ENCODE measurements at regions of chr5 and their contacts with region 1.

Region 1: GRCh38 chr5:79255786-79256557 is 20.0 kb downstream of the JMY start:
- DNase-seq: no peak
- ATAC-seq: no peak
- H3K4me3 ChIP-seq: no peak overlapping the region
- H3K4me3 Mint-ChIP-seq: peak overlapping the region in 1 of 3 donors; percentile 37
- H3K27ac ChIP-seq: no peak overlapping the region
- H3K27ac Mint-ChIP-seq: no peak overlapping the region
- H3K4me1 ChIP-seq: peaks cover 0 to 40% of the 10 kb centered on the region in 2 experiments
- H3K4me1 Mint-ChIP-seq: peaks cover 58 to 62% (median 61%) of the 10 kb centered on the region in 3 donors
- H3K27me3 ChIP-seq: no peaks in the 10 kb centered on the region
- H3K27me3 Mint-ChIP-seq: no peaks in the 10 kb centered on the region

Region 2: DNA sequence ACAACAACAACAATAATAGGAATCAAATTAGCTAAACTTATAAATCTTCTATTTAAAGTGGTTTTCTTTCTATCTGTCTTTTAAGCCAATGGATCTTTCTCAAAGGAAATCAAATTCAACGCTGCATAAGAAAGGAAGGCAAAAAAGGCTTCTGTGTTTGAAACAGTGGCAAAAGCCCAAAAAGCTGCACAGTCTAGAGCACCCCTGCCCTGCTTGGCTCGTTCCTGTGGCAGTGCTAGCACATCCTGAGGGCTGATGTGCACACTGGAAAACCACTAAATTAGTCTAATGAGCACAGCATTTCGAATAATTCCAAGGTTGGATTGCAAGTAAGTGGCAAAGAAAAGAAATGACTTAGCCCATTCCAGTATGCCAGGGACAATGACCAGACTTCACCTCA is 1042.2 kb before region 1 on chr5:
- CTCF ChIA-PET with region 1: no interaction called
- POLR2A ChIA-PET with region 1: no interaction called
- DNase-seq: no peak
- ATAC-seq: no peak
- H3K4me3 ChIP-seq: no peak overlapping the region
- H3K4me3 Mint-ChIP-seq: no peak overlapping the region
- H3K27ac ChIP-seq: no peak overlapping the region
- H3K27ac Mint-ChIP-seq: no peak overlapping the region
- H3K4me1 ChIP-seq: no peaks in the 10 kb centered on the region
- H3K4me1 Mint-ChIP-seq: no peaks in the 10 kb centered on the region
- H3K27me3 ChIP-seq: no peaks in the 10 kb centered on the region
- H3K27me3 Mint-ChIP-seq: no peaks in the 10 kb centered on the region

Region 3: GRCh38 chr5:78908173-78909061 is 347.6 kb before region 1 on chr5:
- CTCF ChIA-PET with region 1: no interaction called
- POLR2A ChIA-PET with region 1: no interaction called
- DNase-seq: no peak
- ATAC-seq: no peak
- H3K4me3 ChIP-seq: no peak overlapping the region
- H3K4me3 Mint-ChIP-seq: no peak overlapping the region
- H3K27ac ChIP-seq: no peak overlapping the region
- H3K27ac Mint-ChIP-seq: no peak overlapping the region
- H3K4me1 ChIP-seq: no peaks in the 10 kb centered on the region
- H3K4me1 Mint-ChIP-seq: peaks cover 0 to 3% (median 2%) of the 10 kb centered on the region in 3 donors
- H3K27me3 ChIP-seq: no peaks in the 10 kb centered on the region
- H3K27me3 Mint-ChIP-seq: no peaks in the 10 kb centered on the region

Region 4: DNA sequence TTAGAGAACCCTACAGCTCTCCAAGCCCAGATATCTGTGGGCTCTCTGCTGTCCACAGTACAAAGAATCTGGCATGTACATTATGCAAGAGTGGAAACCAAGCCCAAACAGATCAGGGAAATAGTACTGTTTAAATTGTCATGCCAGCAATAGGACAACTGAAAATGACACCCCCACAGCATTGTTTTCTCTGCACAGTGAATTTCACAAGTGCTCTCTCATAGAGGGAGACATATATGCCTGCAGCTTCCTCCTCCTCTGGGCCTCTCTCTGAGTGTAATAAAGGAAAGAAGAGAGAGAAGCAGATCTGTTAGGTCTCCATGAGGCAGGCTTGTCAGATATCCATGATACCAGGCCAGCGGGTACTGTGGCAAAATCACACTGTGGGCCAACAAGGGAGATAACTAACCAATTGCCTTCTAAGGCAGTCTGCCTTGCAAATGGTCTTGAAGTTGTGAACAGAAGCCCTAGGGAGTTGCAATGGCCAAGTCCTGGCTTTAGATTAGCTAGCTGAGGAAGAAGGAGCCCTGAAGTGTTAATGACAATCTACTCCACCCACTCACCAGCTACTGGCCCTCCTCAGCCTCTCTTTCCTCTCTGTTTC is 74.5 kb before region 1 on chr5:
- CTCF ChIA-PET with region 1: no interaction called
- POLR2A ChIA-PET with region 1: interaction called in 1 of 2 experiments, 14 read pairs
- DNase-seq: no peak
- ATAC-seq: no peak
- H3K4me3 ChIP-seq: no peak overlapping the region
- H3K4me3 Mint-ChIP-seq: no peak overlapping the region
- H3K27ac ChIP-seq: no peak overlapping the region
- H3K27ac Mint-ChIP-seq: no peak overlapping the region
- H3K4me1 ChIP-seq: no peaks in the 10 kb centered on the region
- H3K4me1 Mint-ChIP-seq: no peaks in the 10 kb centered on the region
- H3K27me3 ChIP-seq: no peaks in the 10 kb centered on the region
- H3K27me3 Mint-ChIP-seq: no peaks in the 10 kb centered on the region

Measured in T-cell (primary cell).